Endothelial cell of umbilical vein (primary cell): ENCODE measurements at regions of chr4 and their contacts with region 1.

Region 1: DNA sequence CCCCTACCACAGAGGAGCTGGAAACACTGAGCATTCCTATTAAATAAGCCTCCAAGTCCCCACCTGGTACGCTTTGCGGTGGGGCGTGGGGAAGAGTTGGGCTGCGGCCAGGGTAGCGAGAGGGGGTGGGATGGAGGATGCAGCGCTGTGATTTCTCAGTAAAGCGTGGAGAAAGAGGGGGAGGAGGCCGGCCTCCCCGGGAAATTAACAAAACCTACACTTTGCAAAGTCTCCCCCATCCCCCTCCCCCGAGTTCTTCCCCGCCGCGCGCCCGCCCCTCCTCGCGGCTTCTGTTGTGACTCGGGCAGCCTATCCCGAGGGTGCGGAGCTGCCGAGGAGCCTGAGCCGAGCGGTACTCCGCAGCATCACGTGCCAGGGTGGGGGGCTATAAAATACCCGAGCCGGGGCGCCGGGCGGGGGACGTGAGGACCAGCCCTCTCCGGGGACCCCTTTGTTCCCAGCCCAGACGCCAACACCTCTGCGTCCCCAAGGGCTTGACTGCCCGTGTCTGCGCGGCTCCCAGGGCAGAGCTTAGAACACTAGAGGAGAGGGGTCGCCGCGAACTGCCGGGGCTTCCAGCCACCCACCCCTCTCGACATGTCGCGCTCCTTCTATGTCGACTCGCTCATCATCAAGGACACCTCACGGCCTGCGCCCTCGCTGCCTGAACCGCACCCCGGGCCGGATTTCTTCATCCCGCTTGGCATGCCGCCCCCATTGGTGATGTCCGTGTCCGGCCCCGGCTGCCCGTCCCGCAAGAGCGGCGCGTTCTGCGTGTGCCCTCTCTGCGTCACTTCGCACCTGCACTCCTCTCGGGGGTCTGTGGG is at the start of gene GSX2:
- DNase-seq: no peak
- H3K4me3 ChIP-seq: peak within 1 kb of the TSS in 2 of 3 experiments; percentile 22 to 26
- H3K27ac ChIP-seq: no peak within 1 kb of the TSS
- H3K4me1 ChIP-seq: peaks cover 25% of the 10 kb centered on the region
- H3K27me3 ChIP-seq: peaks cover 75 to 95% of the 10 kb centered on the region in 2 experiments
- CTCF ChIP-seq: no peak
- POLR2A ChIP-seq: no peak
- total RNA-seq, gene GSX2: not detected in 2 replicates

Region 2: GRCh38 chr4:54015423-54016030 is 84.4 kb before region 1 on chr4:
- CTCF ChIA-PET with region 1: no interaction called
- POLR2A ChIA-PET with region 1: no interaction called
- dilution Hi-C with region 1: no loop called
- intact Hi-C with region 1: loop called (anchors 5 kb)
- DNase-seq: no peak
- H3K4me3 ChIP-seq: no peak overlapping the region
- H3K27ac ChIP-seq: no peak overlapping the region
- H3K4me1 ChIP-seq: no peaks in the 10 kb centered on the region
- H3K27me3 ChIP-seq: no peaks in the 10 kb centered on the region
- CTCF ChIP-seq: no peak
- POLR2A ChIP-seq: no peak

Region 3: GRCh38 chr4:54152846-54153600 is 53.1 kb after region 1 on chr4:
- CTCF ChIA-PET with region 1: interaction called, 3 read pairs
- POLR2A ChIA-PET with region 1: no interaction called
- dilution Hi-C with region 1: no loop called
- intact Hi-C with region 1: loop called (anchors 5 kb)
- DNase-seq: no peak
- H3K4me3 ChIP-seq: no peak overlapping the region
- H3K27ac ChIP-seq: no peak overlapping the region
- H3K4me1 ChIP-seq: no peaks in the 10 kb centered on the region
- H3K27me3 ChIP-seq: peaks cover 0 to 6% of the 10 kb centered on the region in 2 experiments
- CTCF ChIP-seq: no peak
- POLR2A ChIP-seq: no peak